PC-9 (cell line): ENCODE measurements at regions of chr11 and their contacts with region 1.

Region 1: GRCh38 chr11:65720237-65720934 is at the start of gene RNASEH2C:
- DNase-seq: peak; percentile 75 to 80
- H3K4me3 ChIP-seq: peak within 1 kb of the TSS; percentile 90
- H3K27ac ChIP-seq: no peak within 1 kb of the TSS
- H3K4me1 ChIP-seq: peaks cover 9% of the 10 kb centered on the region
- H3K27me3 ChIP-seq: no peaks in the 10 kb centered on the region
- CTCF ChIP-seq: no peak
- total RNA-seq, gene RNASEH2C: 31.8 and 42.4 TPM in 2 replicates

Region 2: GRCh38 chr11:65779851-65780577 is 59.6 kb after region 1 on chr11:
- CTCF ChIA-PET with region 1: interaction called, 12 read pairs
- POLR2A ChIA-PET with region 1: interaction called, 4 read pairs
- intact Hi-C with region 1: no loop called
- DNase-seq: peak; percentile 62 to 90
- H3K4me3 ChIP-seq: peak overlapping the region; percentile 58
- H3K27ac ChIP-seq: peak overlapping the region; percentile 52
- H3K4me1 ChIP-seq: peaks cover 28% of the 10 kb centered on the region
- H3K27me3 ChIP-seq: no peaks in the 10 kb centered on the region
- CTCF ChIP-seq: peak; percentile 94

Region 3: DNA sequence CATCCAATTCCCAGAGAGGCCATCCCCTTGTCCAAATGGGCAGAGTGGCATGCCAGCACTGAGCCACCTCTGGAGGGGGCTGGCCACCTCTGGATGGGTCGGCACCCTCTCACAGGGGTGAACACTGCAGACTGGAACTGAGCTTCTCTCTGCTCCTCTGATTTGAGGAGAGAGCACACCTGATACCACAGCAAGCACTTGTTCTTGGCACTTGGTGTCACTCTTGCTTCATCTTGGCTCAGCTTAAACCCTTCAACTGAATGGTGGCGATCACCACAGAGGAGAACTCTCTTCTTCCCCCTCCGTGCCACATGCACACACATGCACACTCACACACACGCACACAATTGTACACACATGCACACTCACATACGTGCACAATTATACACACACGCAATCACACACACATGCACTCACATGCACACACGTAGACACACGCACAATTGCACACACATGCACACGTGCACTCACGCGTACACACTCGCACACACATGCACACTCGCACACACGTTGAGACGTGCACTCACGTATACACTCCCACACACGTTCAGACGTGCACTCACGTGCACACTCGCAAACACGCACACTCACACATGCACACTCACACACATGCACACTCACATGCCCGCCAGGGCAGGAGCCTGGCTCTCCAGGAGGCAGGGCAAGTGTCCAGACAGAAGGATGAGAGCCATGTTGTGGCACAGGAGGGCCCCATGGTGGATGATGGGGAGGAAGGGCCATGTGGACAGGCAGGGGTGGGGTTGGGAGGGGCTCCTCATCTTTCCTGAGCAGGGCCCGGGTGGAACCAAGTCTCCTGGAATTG is 89.9 kb after region 1 on chr11:
- CTCF ChIA-PET with region 1: no interaction called
- POLR2A ChIA-PET with region 1: interaction called, 12 read pairs
- intact Hi-C with region 1: no loop called
- DNase-seq: no peak
- H3K4me3 ChIP-seq: no peak overlapping the region
- H3K27ac ChIP-seq: no peak overlapping the region
- H3K4me1 ChIP-seq: no peaks in the 10 kb centered on the region
- H3K27me3 ChIP-seq: no peaks in the 10 kb centered on the region
- CTCF ChIP-seq: no peak

Region 4: DNA sequence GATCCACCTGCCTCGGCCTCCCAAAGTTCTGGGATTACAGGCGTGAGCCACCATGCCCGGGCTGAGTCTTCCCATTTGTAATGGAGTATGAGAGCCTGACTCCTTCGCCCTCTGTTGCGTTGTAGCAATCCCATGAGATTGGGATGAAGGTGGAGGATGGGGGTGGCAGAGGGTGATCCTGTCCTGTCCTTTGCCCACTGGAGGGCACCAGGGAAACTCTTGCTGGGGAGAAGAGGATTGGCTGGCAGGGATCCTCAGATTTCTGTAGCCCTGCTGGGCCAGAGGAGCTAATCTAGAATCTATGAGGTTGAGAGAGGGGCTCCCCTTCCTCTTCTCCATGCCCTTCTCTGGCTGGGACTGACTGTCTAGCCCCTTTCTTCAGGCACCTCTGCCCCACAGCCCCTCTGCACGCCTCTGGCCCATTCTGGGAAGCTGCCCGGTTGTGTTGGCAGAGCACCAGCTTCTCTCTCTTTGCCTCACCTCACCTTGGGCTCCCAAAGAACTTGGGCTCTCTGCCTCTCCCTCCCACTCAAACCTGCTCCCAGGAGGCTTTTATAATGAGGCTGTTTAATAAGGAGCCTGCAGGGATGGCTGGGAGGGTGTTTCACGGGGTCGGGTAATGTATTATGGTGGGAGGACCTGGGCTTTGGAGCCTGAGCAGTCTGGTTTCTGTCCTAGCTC is 315.4 kb after region 1 on chr11:
- CTCF ChIA-PET with region 1: no interaction called
- POLR2A ChIA-PET with region 1: no interaction called
- intact Hi-C with region 1: no loop called
- DNase-seq: no peak
- H3K4me3 ChIP-seq: no peak overlapping the region
- H3K27ac ChIP-seq: no peak overlapping the region
- H3K4me1 ChIP-seq: no peaks in the 10 kb centered on the region
- H3K27me3 ChIP-seq: no peaks in the 10 kb centered on the region
- CTCF ChIP-seq: no peak